ENCODE measurements at regions of chr6 and their contacts with region 1.

Region 1: DNA sequence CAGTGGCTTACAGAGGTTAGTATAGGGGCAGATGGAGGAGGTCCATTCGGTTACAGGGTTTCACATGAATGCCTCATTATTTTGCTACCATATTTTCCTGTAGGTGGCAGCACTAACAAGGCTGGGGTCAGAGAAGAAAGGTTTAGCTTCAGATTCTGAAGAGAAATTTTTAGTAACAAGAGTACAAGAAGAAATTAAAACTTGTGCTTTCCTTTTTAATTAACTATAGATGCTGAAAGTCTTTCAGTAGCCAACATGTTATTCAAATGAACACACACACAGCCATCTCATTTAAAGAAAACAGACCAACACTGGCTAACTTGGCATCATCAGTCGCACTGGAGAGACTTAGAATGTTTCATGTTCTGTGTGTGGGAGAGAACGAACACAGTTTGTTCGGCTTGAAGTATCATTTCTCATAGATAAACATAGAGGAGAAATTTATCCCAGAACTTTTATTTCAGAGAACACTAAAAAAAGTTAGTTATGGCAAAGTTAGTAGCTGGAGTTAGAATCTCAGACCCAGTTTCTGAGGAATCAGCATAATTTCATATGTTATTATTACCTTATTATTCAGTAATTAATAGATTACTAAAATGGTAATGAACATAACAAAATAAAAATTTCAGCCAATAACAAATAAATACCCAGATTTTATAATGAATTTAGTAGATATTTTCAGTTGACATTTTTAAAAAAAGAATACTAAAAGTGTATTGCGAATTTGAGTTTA is 314.0 kb upstream of the RSPO3 start:
- DNase-seq: peak; percentile 33
- H3K4me3 ChIP-seq: no peak overlapping the region
- H3K27ac ChIP-seq: no peak overlapping the region
- H3K4me1 ChIP-seq: no peaks in the 10 kb centered on the region
- H3K27me3 ChIP-seq: peaks cover 2% of the 10 kb centered on the region
- CTCF ChIP-seq: peak; percentile 74 to 80

Region 2: GRCh38 chr6:127069659-127070279 is 265.3 kb after region 1 on chr6:
- CTCF ChIA-PET with region 1: no interaction called
- dilution Hi-C with region 1: no loop called
- in situ Hi-C with region 1: no loop called
- intact Hi-C with region 1: loop called (anchors 1 kb)
- DNase-seq: peak; percentile 11
- H3K4me3 ChIP-seq: no peak overlapping the region
- H3K27ac ChIP-seq: no peak overlapping the region
- H3K4me1 ChIP-seq: no peaks in the 10 kb centered on the region
- H3K27me3 ChIP-seq: no peaks in the 10 kb centered on the region
- CTCF ChIP-seq: peak; percentile 40 to 61

Region 3: GRCh38 chr6:127186889-127187288 is 382.4 kb after region 1 on chr6:
- CTCF ChIA-PET with region 1: no interaction called
- dilution Hi-C with region 1: no loop called
- in situ Hi-C with region 1: no loop called
- intact Hi-C with region 1: loop called (anchors 2 kb)
- DNase-seq: peak; percentile 24
- H3K4me3 ChIP-seq: no peak overlapping the region
- H3K27ac ChIP-seq: no peak overlapping the region
- H3K4me1 ChIP-seq: no peaks in the 10 kb centered on the region
- H3K27me3 ChIP-seq: peaks cover 10% of the 10 kb centered on the region
- CTCF ChIP-seq: peak; percentile 61 to 69